ENCODE measurements at regions of chr21 and their contacts with region 1.

Region 1: GRCh38 chr21:42227909-42228708 is 9.2 kb downstream of the ABCG1 start:
- DNase-seq: peak; percentile 96
- H3K4me3 Mint-ChIP-seq: peak overlapping the region; percentile 63
- H3K27ac Mint-ChIP-seq: peak overlapping the region; percentile 93
- H3K4me1 Mint-ChIP-seq: peaks cover 76% of the 10 kb centered on the region
- H3K27me3 Mint-ChIP-seq: no peaks in the 10 kb centered on the region

Region 2: DNA sequence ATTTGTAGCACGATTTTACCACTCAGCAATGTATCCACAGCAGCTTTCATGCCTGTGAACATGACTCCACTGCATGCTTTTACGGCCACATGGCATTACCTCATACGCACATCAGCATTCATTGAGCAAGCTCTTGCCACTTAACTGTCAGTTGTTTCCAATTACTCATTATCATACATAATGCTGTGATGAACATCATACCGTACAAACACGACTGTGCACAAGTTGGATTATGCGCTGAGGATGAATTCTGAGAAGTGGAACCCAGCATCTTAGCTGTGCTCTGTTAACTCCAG is 147.4 kb before region 1 on chr21:
- CTCF ChIA-PET with region 1: no interaction called
- POLR2A ChIA-PET with region 1: no interaction called
- intact Hi-C with region 1: no loop called
- DNase-seq: no peak
- H3K4me3 Mint-ChIP-seq: no peak overlapping the region
- H3K27ac Mint-ChIP-seq: no peak overlapping the region
- H3K4me1 Mint-ChIP-seq: no peaks in the 10 kb centered on the region
- H3K27me3 Mint-ChIP-seq: no peaks in the 10 kb centered on the region

Region 3: DNA sequence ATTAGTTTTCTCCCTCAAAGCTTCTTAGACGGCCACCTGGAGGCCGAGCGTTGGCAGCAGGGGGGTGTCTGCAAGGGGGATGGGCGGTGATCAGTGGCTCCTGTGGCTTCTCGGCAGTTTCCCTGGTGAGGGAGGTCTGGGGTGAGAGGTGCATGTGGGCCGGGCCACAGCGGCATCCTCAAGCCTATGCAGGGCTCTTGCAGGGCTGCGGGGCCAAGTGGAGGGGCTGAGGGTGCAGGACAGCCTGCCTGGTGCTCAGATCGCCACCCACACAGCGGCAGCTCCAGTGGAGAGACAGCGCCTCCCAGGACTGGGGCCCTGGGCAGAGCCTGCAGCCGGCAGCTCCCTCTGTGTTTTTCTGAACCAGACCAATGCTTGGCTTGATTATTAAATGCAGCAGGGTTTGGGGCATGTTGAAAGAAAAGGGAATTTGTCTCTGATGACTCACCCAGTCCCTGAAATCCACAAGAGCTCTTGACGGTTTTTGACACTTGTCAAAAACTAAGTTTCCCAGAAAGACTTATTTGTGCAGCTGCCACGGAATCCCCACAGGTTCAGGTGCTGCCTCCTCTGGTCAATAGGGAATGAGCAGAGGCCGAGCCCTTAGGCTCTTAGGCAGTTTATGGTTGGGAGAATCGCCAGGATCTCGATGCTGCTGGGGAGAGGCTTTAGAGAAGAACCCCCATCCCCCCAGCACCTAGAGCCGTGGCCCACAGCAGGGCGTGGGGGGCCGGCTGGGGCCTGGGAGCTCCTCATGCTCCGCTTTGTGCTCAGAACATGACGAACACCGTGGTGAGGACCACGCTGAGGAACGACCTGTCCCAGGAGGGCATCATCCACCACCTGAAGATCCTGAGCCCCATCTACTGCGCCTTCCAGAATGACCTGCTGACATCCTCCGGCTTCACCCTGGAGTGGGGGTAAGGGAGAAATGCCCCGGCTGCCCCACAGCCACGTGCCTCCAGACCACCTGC is 102.3 kb before region 1 on chr21:
- CTCF ChIA-PET with region 1: no interaction called
- POLR2A ChIA-PET with region 1: no interaction called
- intact Hi-C with region 1: no loop called
- DNase-seq: no peak
- H3K4me3 Mint-ChIP-seq: no peak overlapping the region
- H3K27ac Mint-ChIP-seq: no peak overlapping the region
- H3K4me1 Mint-ChIP-seq: peaks cover 2% of the 10 kb centered on the region
- H3K27me3 Mint-ChIP-seq: peaks cover 49% of the 10 kb centered on the region

Region 4: GRCh38 chr21:42187976-42188653 is 40.0 kb before region 1 on chr21:
- CTCF ChIA-PET with region 1: interaction called, 3 read pairs
- POLR2A ChIA-PET with region 1: interaction called, 9 read pairs
- intact Hi-C with region 1: loop called (anchors 1 kb)
- DNase-seq: peak; percentile 92
- H3K4me3 Mint-ChIP-seq: peak overlapping the region; percentile 60
- H3K27ac Mint-ChIP-seq: peak overlapping the region; percentile 96
- H3K4me1 Mint-ChIP-seq: peaks cover 62% of the 10 kb centered on the region
- H3K27me3 Mint-ChIP-seq: no peaks in the 10 kb centered on the region